ENCODE measurements at regions of chr18 and their contacts with region 1.

Region 1: DNA sequence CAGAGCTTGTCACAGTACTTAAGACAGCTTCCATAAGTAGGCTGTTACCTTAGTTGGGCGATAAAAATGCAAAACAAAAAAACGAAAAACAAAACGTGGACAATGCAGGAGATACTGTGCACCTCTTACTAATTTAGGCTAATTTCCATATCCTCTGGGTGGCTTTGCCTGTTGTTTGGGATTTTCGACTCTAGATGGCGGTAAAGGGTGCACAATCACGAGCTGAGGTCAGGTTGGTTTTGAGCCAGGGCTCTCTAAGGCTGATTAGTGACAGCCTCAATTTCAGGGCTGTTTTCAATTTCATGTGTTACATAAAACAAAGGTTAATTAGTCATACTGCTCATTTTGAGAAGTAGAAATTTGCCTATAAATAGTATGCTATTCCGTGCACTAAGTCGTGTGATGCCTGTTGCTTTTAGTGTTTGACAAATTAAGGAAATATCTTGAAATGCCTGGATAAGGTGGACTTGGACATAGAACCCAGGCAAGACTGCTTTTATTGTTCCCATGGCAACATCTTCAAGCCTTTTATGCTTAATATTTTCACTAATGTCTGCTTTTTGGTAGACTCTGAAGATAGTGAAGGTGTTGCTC is 493.1 kb downstream of the SOCS6 start:
- DNase-seq: peak; percentile 84
- H3K4me3 ChIP-seq: no peak overlapping the region
- H3K27ac ChIP-seq: no peak overlapping the region
- H3K4me1 ChIP-seq: peaks cover 6% of the 10 kb centered on the region
- H3K27me3 ChIP-seq: no peaks in the 10 kb centered on the region
- CTCF ChIP-seq: peak; percentile 87

Region 2: DNA sequence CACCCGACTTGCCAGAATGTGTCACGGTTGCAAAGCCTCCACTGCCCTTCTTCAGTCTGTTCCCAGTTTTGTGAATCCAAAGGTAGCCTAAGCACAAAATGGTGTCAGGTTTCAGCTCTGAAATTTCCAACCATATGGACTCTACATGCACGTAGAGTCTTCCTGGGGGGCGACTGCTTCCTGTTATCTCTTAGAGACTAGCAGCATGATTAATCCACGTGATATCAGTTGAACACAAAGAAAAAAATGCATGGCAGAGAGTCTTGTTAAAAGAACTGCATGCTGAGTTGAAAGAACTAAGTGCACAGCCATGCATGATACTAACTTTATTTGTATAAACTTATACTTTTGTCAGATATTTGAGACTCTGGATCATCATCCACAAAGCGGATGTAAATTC is 88.7 kb before region 1 on chr18:
- CTCF ChIA-PET with region 1: no interaction called
- POLR2A ChIA-PET with region 1: no interaction called
- intact Hi-C with region 1: no loop called
- DNase-seq: peak; percentile 86
- H3K4me3 ChIP-seq: no peak overlapping the region
- H3K27ac ChIP-seq: peak overlapping the region; percentile 35
- H3K4me1 ChIP-seq: peaks cover 23% of the 10 kb centered on the region
- H3K27me3 ChIP-seq: no peaks in the 10 kb centered on the region
- CTCF ChIP-seq: no peak

Region 3: DNA sequence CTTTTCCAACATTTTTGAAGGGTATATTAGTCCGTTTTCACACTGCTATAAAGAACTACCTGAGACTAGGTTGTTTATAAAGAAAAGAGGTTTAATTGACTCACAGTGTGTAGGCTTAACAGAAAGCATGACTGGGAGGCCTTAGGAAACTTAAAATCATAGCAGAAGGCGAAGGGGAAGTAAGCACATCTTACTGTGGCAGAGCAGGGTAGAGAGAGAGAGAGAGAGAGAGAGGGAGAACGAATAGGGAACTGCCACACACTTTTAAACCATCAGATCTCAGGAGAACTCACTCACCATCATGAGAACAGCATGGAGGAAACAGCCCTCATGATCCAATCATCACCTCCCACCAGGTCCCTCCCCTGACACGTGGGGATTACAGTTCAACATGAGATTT is 72.8 kb before region 1 on chr18:
- CTCF ChIA-PET with region 1: no interaction called
- POLR2A ChIA-PET with region 1: no interaction called
- intact Hi-C with region 1: loop called (anchors 5 kb)
- DNase-seq: no peak
- H3K4me3 ChIP-seq: no peak overlapping the region
- H3K27ac ChIP-seq: no peak overlapping the region
- H3K4me1 ChIP-seq: peaks cover 36% of the 10 kb centered on the region
- H3K27me3 ChIP-seq: no peaks in the 10 kb centered on the region
- CTCF ChIP-seq: no peak

Region 4: DNA sequence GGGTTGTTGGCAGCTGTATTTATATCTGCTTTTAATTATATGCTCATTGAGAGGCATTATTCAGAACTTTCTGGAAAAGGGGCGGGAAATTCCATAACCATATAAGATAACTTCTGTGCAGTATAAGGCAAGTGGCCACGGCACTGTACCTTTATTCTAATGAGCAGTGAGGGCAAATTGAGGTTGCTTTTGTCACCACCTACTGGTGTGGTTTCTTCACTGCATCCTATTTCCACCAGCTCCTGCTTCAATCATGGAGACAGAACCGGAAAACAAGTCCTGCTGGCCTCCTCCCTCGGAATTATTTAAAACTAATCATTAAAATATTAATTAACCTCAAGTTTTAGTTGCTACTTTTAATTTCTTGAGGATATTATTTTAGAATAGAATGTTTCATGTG is 1002.8 kb after region 1 on chr18:
- CTCF ChIA-PET with region 1: no interaction called
- POLR2A ChIA-PET with region 1: no interaction called
- intact Hi-C with region 1: loop called (anchors 10 kb)
- DNase-seq: peak; percentile 40
- H3K4me3 ChIP-seq: no peak overlapping the region
- H3K27ac ChIP-seq: no peak overlapping the region
- H3K4me1 ChIP-seq: no peaks in the 10 kb centered on the region
- H3K27me3 ChIP-seq: no peaks in the 10 kb centered on the region
- CTCF ChIP-seq: peak; percentile 65

Region 5: DNA sequence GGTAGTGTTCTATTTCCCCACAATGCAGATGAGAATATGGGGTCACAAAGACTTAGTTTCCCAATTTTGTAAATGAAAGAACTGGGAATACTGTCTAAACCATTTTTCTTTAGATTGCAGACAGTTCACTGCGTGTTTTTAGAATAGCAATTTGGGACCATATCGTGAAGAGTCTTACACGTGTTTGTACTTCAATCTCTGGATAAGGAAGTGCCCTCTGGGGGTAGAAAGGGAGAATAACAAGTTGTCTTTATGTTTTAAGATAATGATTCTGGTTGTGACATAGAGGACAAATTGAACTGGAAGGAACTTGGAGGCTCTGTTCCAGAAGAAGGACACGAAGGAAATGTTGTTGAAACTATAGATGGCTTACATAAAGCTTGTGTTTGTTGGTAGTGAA is 1304.5 kb after region 1 on chr18:
- CTCF ChIA-PET with region 1: no interaction called
- POLR2A ChIA-PET with region 1: no interaction called
- intact Hi-C with region 1: loop called (anchors 10 kb)
- DNase-seq: peak; percentile 62
- H3K4me3 ChIP-seq: no peak overlapping the region
- H3K27ac ChIP-seq: no peak overlapping the region
- H3K4me1 ChIP-seq: no peaks in the 10 kb centered on the region
- H3K27me3 ChIP-seq: no peaks in the 10 kb centered on the region
- CTCF ChIP-seq: peak; percentile 63

Region 6: DNA sequence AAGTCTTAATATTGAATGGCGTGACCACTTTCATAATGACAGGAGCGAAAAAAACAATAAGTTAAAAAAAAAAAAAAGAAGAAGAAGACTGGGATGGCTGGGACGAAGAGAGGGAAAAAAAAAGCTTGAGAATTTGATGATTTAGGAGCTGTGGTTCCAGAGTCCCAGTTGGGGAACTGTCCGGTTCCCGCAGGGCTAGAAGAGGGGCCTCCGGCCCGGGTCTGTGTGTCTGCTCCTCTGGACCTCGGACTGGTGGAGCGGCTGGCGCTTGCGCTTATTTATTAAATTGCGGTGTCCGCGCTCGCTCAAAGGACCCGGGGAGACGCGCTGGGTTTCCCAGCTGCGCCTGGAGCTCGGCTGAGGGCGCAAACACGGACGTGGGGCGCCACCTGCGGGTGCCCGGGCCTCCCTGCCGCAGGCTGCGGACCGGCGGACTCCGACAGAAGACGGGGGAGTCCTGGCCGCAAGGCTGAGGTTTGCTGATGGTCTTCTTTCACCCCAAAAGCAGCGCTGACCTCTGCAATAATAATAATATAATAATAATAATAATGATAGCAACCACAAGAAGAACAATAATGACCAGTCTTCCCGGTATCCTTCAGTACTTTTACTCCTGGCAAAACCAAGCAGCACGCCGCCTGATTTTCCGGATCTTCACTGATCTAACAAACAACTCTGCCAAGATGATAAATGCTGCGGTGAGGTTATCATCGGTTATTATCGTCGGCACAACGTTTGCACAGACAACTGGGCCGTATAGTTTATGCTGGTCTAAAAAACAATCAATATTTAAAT is 1762.3 kb after region 1 on chr18 and contains the start of gene CBLN2:
- CTCF ChIA-PET with region 1: no interaction called
- POLR2A ChIA-PET with region 1: no interaction called
- intact Hi-C with region 1: loop called (anchors 5 kb)
- DNase-seq: peak; percentile 86
- H3K4me3 ChIP-seq: peak within 1 kb of the TSS; percentile 51
- H3K27ac ChIP-seq: no peak within 1 kb of the TSS
- H3K4me1 ChIP-seq: peaks cover 7% of the 10 kb centered on the region
- H3K27me3 ChIP-seq: peaks cover 22% of the 10 kb centered on the region
- CTCF ChIP-seq: peak; percentile 84
- total RNA-seq, gene CBLN2: 7.5 and 9.7 TPM in 2 replicates

Measured in A673 (cell line).